Gastrocnemius medialis (tissue), 4 donors: ENCODE measurements at regions of chr2 and their contacts with region 1.

Region 1: GRCh38 chr2:121076885-121077549 is 208.0 kb downstream of the TFCP2L1 start:
- DNase-seq: peak; percentile 28 to 51
- ATAC-seq: peak; percentile 31 to 48
- H3K4me3 ChIP-seq: no peak overlapping the region
- H3K27ac ChIP-seq: no peak overlapping the region
- H3K4me1 ChIP-seq: no peaks in the 10 kb centered on the region
- H3K27me3 ChIP-seq: peaks cover 12 to 19% (median 14%) of the 10 kb centered on the region in 3 donors
- CTCF ChIP-seq: peak; percentile 64 to 94 (median 86)
- POLR2A ChIP-seq: no peak

Region 2: DNA sequence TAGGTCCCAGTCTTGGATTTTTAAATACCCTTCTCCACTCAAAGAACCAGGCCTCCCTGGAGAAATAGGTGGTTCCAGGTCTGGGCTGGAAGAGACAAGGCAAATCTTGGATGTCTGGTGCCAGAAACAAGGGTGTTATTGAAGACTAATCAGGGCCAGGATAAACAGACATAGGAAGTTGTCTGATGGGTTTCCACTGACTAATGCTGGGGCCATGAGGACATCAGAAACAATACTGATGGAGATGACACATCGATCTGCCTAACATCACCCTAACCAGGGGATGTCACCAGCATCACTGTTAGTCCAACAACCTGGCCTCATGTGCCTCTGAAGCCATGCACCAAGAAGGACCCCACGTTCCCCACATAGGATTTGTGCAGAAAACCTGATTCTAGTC is 383.9 kb before region 1 on chr2:
- in situ Hi-C with region 1: loop called (anchors 5 kb)
- intact Hi-C with region 1: loop called (anchors 1 kb)
- DNase-seq: no peak
- ATAC-seq: no peak
- H3K4me3 ChIP-seq: no peak overlapping the region
- H3K27ac ChIP-seq: no peak overlapping the region
- H3K4me1 ChIP-seq: no peaks in the 10 kb centered on the region
- H3K27me3 ChIP-seq: peaks cover 0 to 8% (median 8%) of the 10 kb centered on the region in 3 donors
- CTCF ChIP-seq: no peak
- POLR2A ChIP-seq: no peak

Region 3: DNA sequence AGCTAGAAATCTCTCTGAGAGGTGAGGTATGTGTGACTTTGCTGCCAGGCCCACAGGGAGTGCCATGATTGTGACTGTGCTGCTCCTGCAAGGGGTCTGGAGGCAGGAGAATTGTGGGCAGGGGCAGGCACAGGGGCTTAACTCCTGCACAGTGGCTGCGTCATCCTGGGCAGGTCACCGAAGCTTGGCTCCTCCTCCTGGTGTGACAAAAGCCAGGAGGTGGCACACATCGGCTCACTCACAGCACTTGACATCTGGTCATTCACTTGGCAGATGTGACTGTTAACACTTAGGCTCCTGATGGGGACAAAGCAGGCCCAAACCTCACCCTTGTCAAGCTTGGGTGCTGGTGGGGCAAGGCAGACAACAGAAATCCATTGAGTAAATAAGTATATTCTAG is 377.7 kb before region 1 on chr2:
- in situ Hi-C with region 1: loop called (anchors 5 kb)
- intact Hi-C with region 1: loop called (anchors 1 kb)
- DNase-seq: no peak
- ATAC-seq: no peak
- H3K4me3 ChIP-seq: no peak overlapping the region
- H3K27ac ChIP-seq: no peak overlapping the region
- H3K4me1 ChIP-seq: no peaks in the 10 kb centered on the region
- H3K27me3 ChIP-seq: peaks cover 0 to 8% (median 8%) of the 10 kb centered on the region in 3 donors
- CTCF ChIP-seq: no peak
- POLR2A ChIP-seq: no peak

Region 4: GRCh38 chr2:120949027-120949956 is 127.7 kb before region 1 on chr2:
- in situ Hi-C with region 1: no loop called
- intact Hi-C with region 1: loop called (anchors 10 kb)
- DNase-seq: no peak
- ATAC-seq: peak; percentile 31 to 48
- H3K4me3 ChIP-seq: no peak overlapping the region
- H3K27ac ChIP-seq: no peak overlapping the region
- H3K4me1 ChIP-seq: peaks cover 10 to 19% of the 10 kb centered on the region in 2 donors
- H3K27me3 ChIP-seq: no peaks in the 10 kb centered on the region
- CTCF ChIP-seq: peak in 3 of 5 experiments; percentile 17 to 48 (median 46)
- POLR2A ChIP-seq: no peak

Region 5: DNA sequence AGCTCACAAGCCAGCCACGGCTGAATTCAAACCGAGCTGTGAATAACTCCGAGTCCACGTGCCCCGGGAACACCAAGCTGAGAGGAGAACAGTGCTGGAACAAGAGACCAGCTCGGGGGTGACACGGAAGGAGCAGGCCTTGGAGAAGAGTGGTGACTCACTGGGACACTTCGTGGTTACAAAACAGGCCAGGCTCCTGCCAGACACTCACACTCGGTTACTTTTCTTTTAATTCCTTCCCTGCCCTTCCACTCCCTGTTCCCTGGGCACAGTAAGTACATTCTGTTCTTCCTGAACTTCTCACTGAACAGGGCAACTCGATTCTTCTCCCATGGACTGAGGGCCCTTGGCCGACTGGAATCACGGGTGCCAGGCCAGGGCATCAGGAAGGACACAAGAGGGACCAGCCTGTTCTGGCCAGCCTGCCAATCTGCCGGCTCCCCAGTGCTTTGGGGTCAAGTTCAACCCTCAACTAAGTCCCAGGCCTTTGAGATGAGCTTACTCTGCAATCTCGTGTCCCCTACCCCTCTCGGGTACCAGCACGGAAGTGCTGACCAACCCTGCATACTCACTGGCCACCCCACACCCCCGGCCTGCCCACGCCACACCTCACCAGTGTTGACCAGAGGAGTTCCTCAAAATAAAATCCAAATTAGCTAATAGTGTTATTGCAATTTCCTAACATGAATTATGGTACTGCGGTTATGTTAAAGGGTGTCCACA is 120.5 kb after region 1 on chr2:
- in situ Hi-C with region 1: no loop called
- intact Hi-C with region 1: no loop called
- DNase-seq: peak; percentile 97 to 99
- ATAC-seq: peak; percentile 92 to 93
- H3K4me3 ChIP-seq: no peak overlapping the region
- H3K27ac ChIP-seq: peak overlapping the region; percentile 90 to 96 (median 94)
- H3K4me1 ChIP-seq: peaks cover 22 to 32% of the 10 kb centered on the region in 2 donors
- H3K27me3 ChIP-seq: no peaks in the 10 kb centered on the region
- CTCF ChIP-seq: no peak
- POLR2A ChIP-seq: peak in 1 of 2 donors; percentile 43

Region 6: DNA sequence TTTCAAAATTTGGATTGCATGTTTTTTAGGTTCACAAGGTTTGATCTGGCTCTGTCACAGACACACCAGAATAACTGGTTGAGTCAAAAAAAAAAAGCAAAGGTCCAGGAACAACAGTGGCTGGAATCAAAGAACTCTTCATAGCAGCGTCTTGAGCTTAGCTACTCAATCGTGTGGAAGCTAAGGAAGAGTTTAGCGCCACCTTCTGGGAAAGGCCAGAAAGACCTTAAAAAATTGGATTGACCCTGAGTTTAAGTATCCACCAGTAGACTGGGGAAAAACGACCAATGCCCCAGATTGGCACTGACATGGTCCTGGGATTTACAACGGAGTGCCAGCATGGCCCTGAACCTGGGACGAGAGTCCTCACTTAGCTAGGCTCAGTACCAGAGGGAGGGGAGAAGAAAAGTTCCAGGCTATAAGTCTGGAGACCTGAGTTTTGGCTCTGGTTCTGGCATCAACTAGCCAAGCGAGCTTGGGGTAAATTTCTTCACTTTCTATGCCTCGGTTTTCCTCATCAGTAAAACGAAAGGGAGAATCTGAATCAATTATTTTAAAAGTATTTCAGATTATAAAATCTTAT is 279.1 kb after region 1 on chr2:
- in situ Hi-C with region 1: loop called in 1 of 4 experiments (anchors 25 kb)
- intact Hi-C with region 1: no loop called
- DNase-seq: no peak
- ATAC-seq: peak; percentile 35 to 62
- H3K4me3 ChIP-seq: no peak overlapping the region
- H3K27ac ChIP-seq: peak overlapping the region; percentile 14 to 55 (median 50)
- H3K4me1 ChIP-seq: peaks cover 26 to 34% of the 10 kb centered on the region in 2 donors
- H3K27me3 ChIP-seq: no peaks in the 10 kb centered on the region
- CTCF ChIP-seq: peak; percentile 41 to 75 (median 61)
- POLR2A ChIP-seq: no peak